HepG2 (cell line): ENCODE measurements at regions of chr2 and their contacts with region 1.

Region 1: GRCh38 chr2:43005245-43005974 is 213.0 kb upstream of the HAAO start:
- DNase-seq: peak; percentile 99
- ATAC-seq: peak; percentile 96
- H3K4me3 ChIP-seq: peak overlapping the region; percentile 27 to 67 (median 39); a peak in 5 of 6 replicates
- H3K27ac ChIP-seq: peak overlapping the region; percentile 75
- H3K4me1 ChIP-seq: peaks cover 85% of the 10 kb centered on the region
- H3K27me3 ChIP-seq: no peaks in the 10 kb centered on the region
- CTCF ChIP-seq: peak; percentile 54
- EP300 ChIP-seq: peak in 1 of 2 experiments; percentile 90; a peak in 2 of 4 replicates
- POLR2A ChIP-seq: peak; percentile 36 to 92; a peak in 3 of 4 replicates
- RAD21 ChIP-seq: no peak

Region 2: DNA sequence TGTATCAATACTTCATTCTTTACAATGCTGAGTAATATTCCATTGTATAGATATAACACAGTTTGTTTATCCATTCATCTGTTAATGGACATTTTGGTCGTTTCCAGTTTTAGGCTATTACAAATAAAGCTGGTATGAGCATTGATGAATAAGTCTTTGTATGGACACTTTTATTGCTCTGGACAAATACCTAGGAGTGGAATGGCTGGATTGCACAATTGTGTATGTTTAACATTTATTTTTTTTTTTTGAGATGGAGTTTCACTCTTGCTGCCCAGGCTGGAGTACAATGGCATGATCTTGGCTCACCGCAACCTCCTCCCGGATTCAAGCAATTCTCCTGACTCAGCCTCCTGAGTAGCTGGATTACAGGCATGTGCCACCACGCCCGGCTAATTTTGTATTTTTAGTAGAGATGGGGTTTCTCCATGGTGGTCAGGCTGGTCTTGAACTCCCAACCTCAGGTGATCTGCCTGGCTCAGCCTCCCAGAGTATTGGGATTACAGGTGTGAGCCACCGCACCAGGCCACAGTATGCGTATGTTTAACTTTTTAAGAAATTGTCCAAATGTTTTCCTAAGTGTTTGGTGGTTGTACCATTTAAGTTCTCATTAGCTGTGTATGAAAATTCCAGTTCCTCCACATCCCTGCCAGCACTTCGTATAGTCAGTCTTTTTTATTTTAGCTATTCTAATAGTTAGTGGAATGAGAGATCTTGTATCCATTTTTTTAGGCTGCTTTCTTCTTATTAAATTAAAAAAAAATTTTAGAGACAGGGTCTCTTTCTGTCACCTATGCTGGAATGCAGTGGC is 18.1 kb before region 1 on chr2:
- CTCF ChIA-PET with region 1: no interaction called
- POLR2A ChIA-PET with region 1: interaction called, 555 read pairs
- in situ Hi-C with region 1: no loop called
- intact Hi-C with region 1: loop called (anchors 2 kb)
- DNase-seq: peak; percentile 91
- ATAC-seq: peak; percentile 74
- H3K4me3 ChIP-seq: no peak overlapping the region
- H3K27ac ChIP-seq: peak overlapping the region; percentile 73
- H3K4me1 ChIP-seq: peaks cover 81% of the 10 kb centered on the region
- H3K27me3 ChIP-seq: no peaks in the 10 kb centered on the region
- CTCF ChIP-seq: no peak
- EP300 ChIP-seq: peak in 1 of 2 experiments; percentile 77; a peak in 2 of 4 replicates
- POLR2A ChIP-seq: no peak
- RAD21 ChIP-seq: no peak

Region 3: GRCh38 chr2:43018179-43019024 is 13.0 kb after region 1 on chr2:
- CTCF ChIA-PET with region 1: no interaction called
- POLR2A ChIA-PET with region 1: interaction called, 86 read pairs
- in situ Hi-C with region 1: no loop called
- intact Hi-C with region 1: loop called (anchors 1 kb)
- DNase-seq: peak; percentile 90
- ATAC-seq: peak; percentile 94
- H3K4me3 ChIP-seq: peak overlapping the region in 1 of 3 experiments; percentile 36; a peak in 2 of 6 replicates
- H3K27ac ChIP-seq: peak overlapping the region; percentile 51
- H3K4me1 ChIP-seq: peaks cover 61% of the 10 kb centered on the region
- H3K27me3 ChIP-seq: no peaks in the 10 kb centered on the region
- CTCF ChIP-seq: peak; percentile 60
- EP300 ChIP-seq: peak; percentile 78 to 96; a peak in 3 of 4 replicates
- POLR2A ChIP-seq: peak in 1 of 2 experiments; percentile 52; a peak in 1 of 4 replicates
- RAD21 ChIP-seq: peak; percentile 44

Region 4: DNA sequence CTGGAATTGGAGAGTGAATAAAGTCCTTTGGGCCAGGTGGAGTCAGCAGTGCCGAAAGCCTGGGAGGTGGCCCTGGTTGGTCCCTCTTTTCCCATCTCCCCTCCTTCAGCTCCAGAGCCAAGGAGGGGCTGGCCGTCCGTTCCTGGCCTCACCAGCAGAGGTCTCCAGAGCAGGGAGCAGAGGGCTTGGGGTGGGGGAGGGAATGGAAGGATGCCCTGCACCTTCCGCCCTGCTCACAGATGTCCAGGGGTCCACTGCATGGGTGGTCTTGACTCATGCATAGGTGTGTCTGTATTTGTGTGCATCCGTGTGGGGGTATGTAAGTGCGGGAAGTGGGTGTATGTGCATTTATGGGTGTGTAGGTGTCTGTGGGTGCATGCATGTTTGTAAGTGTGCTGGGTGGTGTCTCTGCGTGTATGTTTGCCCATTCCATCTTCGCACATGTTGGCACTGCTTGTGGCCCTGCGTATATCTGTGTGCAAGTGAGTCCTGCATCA is 19.2 kb after region 1 on chr2:
- CTCF ChIA-PET with region 1: no interaction called
- POLR2A ChIA-PET with region 1: interaction called, 86 read pairs
- in situ Hi-C with region 1: no loop called
- intact Hi-C with region 1: no loop called
- DNase-seq: no peak
- ATAC-seq: peak; percentile 83
- H3K4me3 ChIP-seq: no peak overlapping the region
- H3K27ac ChIP-seq: no peak overlapping the region
- H3K4me1 ChIP-seq: peaks cover 60% of the 10 kb centered on the region
- H3K27me3 ChIP-seq: no peaks in the 10 kb centered on the region
- CTCF ChIP-seq: peak; percentile 98
- EP300 ChIP-seq: peak in 1 of 2 experiments; percentile 19; a peak in 1 of 4 replicates
- POLR2A ChIP-seq: no peak
- RAD21 ChIP-seq: peak; percentile 94